WTC11 (cell line): ENCODE measurements at regions of chr19 and their contacts with region 1.

Region 1: GRCh38 chr19:10936661-10937084 is 8.1 kb downstream of the TIMM29 start:
- DNase-seq: peak; percentile 59
- ATAC-seq: peak; percentile 97
- H3K4me3 Mint-ChIP-seq: peak overlapping the region; percentile 11; the same call in 1 of the 2 replicates
- H3K27ac Mint-ChIP-seq: no peak overlapping the region
- H3K4me1 Mint-ChIP-seq: no peaks in the 10 kb centered on the region; the same call in 1 of the 2 replicates
- H3K27me3 Mint-ChIP-seq: no peaks in the 10 kb centered on the region
- CTCF ChIP-seq: peak; percentile 40

Region 2: DNA sequence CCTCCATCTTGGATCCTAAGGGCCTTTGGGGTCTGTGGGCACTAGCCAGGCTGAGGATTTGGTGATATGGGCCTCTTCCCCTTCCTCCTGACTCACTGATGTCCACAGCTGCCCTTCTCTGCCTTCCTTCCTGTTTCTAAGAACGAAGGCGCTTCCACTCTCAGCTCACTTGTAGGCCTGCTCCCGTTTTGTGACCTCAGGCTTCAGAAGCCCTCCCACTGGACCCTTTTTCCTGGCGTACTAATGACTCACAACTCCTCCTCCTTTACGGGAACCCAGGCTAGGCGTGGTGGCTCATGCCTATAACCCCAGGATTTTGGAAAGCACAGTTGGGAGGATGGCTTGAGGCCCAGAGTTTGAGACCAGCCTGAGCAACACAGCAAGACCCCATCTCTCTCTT is 156.3 kb before region 1 on chr19:
- CTCF ChIA-PET with region 1: no interaction called
- POLR2A ChIA-PET with region 1: no interaction called
- DNase-seq: no peak
- ATAC-seq: no peak
- H3K4me3 Mint-ChIP-seq: no peak overlapping the region
- H3K27ac Mint-ChIP-seq: peak overlapping the region; percentile 63
- H3K4me1 Mint-ChIP-seq: no peaks in the 10 kb centered on the region
- H3K27me3 Mint-ChIP-seq: no peaks in the 10 kb centered on the region
- CTCF ChIP-seq: no peak

Region 3: DNA sequence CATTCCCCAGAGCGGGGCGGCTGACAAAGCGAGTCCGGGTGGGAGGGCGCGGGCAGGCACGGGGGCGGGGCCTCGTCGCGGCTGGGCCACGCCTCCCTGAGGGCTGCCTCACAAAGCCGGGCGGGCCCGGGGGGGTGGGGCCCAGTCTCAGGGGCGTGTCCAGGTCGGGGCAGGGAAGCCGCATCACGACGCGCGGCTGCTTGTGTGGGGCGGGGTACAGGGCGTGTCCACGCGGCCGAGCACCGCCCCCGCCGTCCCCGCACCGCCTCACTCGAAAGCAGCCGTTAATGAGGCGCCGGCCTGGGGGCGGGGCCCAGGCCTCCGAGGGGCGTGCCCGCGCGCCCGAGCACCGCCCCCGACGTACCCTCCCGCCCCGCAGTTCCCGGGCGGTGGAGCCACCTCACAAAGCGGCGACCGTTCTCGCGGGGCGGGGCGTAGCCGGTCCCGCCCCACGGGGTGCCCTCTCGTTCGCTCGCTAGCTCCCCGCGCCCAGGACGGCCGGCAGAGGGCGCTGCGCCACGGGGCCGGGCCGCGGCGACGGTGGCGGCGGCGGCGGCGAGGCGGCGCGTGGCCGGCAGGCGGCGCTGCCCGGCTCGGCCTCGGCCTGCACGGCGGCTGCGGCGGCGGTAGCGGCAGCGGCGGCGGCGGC is 65.6 kb before region 1 on chr19 and contains the start of gene CARM1:
- CTCF ChIA-PET with region 1: interaction called, 10 read pairs
- POLR2A ChIA-PET with region 1: no interaction called
- DNase-seq: peak; percentile 99
- ATAC-seq: peak; percentile 90
- H3K4me3 Mint-ChIP-seq: peak within 1 kb of the TSS; percentile 90
- H3K27ac Mint-ChIP-seq: peak within 1 kb of the TSS; percentile 93
- H3K4me1 Mint-ChIP-seq: peaks cover 23% of the 10 kb centered on the region
- H3K27me3 Mint-ChIP-seq: no peaks in the 10 kb centered on the region; the same call in 1 of the 2 replicates
- CTCF ChIP-seq: peak; percentile 56
- total RNA-seq, gene CARM1: 125 to 126 TPM (median 126 TPM) in 3 replicates

Region 4: GRCh38 chr19:10911579-10912363 is 24.9 kb before region 1 on chr19:
- CTCF ChIA-PET with region 1: no interaction called
- POLR2A ChIA-PET with region 1: no interaction called
- DNase-seq: no peak
- ATAC-seq: no peak
- H3K4me3 Mint-ChIP-seq: no peak overlapping the region
- H3K27ac Mint-ChIP-seq: no peak overlapping the region
- H3K4me1 Mint-ChIP-seq: no peaks in the 10 kb centered on the region
- H3K27me3 Mint-ChIP-seq: no peaks in the 10 kb centered on the region
- CTCF ChIP-seq: no peak

Region 5: GRCh38 chr19:10960314-10961072 is 23.8 kb after region 1 on chr19 and contains the start of gene SMARCA4:
- CTCF ChIA-PET with region 1: interaction called, 77 read pairs
- POLR2A ChIA-PET with region 1: interaction called, 4 read pairs
- DNase-seq: peak; percentile 96
- ATAC-seq: peak; percentile 88
- H3K4me3 Mint-ChIP-seq: peak within 1 kb of the TSS; percentile 95
- H3K27ac Mint-ChIP-seq: peak within 1 kb of the TSS; percentile 86
- H3K4me1 Mint-ChIP-seq: peaks cover 19% of the 10 kb centered on the region
- H3K27me3 Mint-ChIP-seq: no peaks in the 10 kb centered on the region; the same call in 1 of the 2 replicates
- CTCF ChIP-seq: no peak
- total RNA-seq, gene SMARCA4: 268 to 295 TPM (median 284 TPM) in 3 replicates

Region 6: GRCh38 chr19:10979951-10980381 is 43.3 kb after region 1 on chr19:
- CTCF ChIA-PET with region 1: interaction called, 17 read pairs
- POLR2A ChIA-PET with region 1: no interaction called
- DNase-seq: no peak
- ATAC-seq: no peak
- H3K4me3 Mint-ChIP-seq: no peak overlapping the region
- H3K27ac Mint-ChIP-seq: peak overlapping the region; percentile 92
- H3K4me1 Mint-ChIP-seq: peaks cover 23% of the 10 kb centered on the region
- H3K27me3 Mint-ChIP-seq: no peaks in the 10 kb centered on the region
- CTCF ChIP-seq: no peak

Region 7: DNA sequence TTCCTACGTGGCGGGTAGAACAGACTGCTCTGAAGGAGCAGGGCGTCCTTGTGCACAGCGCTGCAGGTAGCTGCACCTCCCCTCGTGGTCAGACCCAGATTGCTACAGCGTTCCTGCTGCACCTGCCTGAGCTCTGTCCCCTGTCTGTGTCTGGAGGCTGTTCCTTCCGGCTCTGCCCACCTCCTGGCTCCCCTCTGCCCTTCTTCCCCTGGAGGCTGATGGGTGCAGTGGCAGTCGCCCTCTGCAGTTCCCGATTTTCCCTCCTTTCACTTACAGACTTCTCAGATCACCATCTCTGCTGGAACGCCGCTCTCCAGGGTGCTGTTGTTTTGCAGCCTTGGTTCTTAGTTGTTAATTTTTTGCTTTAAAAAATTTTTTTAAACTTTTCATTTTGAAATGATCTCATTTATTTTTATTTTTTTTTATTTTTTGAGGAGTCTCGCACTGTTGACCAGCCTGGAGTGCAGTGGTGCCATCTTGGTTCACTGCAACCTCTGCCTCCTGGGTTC is 77.8 kb after region 1 on chr19:
- CTCF ChIA-PET with region 1: interaction called, 16 read pairs
- POLR2A ChIA-PET with region 1: no interaction called
- DNase-seq: no peak
- ATAC-seq: peak; percentile 73
- H3K4me3 Mint-ChIP-seq: no peak overlapping the region
- H3K27ac Mint-ChIP-seq: peak overlapping the region; percentile 84; the same call in 1 of the 2 replicates
- H3K4me1 Mint-ChIP-seq: no peaks in the 10 kb centered on the region
- H3K27me3 Mint-ChIP-seq: no peaks in the 10 kb centered on the region
- CTCF ChIP-seq: no peak

Region 8: DNA sequence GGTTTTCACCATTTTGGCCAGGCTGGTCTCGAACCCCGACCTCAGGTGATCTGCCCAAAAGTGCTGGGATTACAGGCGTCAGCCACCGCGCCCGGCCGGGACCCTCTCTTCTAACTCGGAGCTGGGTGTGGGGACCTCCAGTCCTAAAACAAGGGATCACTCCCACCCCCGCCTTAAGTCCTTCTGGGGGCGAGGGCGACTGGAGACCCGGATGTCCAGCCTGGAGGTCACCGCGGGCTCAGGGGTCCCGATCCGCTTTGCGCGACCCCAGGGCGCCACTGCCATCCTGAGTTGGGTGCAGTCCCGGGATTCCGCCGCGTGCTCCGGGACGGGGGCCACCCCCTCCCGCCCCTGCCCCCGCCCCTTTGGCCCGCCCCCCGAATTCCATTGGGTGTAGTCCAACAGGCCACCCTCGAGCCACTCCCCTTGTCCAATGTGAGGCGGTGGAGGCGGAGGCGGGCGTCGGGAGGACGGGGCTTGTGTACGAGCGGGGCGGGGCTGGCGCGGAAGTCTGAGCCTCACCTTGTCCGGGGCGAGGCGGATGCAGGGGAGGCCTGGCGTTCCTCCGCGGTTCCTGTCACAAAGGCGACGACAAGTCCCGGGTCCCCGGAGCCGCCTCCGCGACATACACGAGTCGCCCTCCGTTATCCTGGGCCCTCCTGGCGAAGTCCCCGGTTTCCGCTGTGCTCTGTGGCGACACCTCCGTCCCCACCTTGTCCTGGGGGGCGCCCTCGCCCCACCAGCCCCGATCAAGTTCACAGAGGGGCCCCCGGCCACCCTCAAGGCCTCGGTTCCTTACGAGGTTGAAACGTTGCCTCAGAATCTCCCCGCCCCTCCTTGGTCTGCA is 153.6 kb after region 1 on chr19:
- CTCF ChIA-PET with region 1: interaction called, 12 read pairs
- POLR2A ChIA-PET with region 1: no interaction called
- DNase-seq: peak; percentile 98
- ATAC-seq: peak; percentile 93
- H3K4me3 Mint-ChIP-seq: peak overlapping the region; percentile 94
- H3K27ac Mint-ChIP-seq: peak overlapping the region; percentile 100
- H3K4me1 Mint-ChIP-seq: peaks cover 44% of the 10 kb centered on the region
- H3K27me3 Mint-ChIP-seq: no peaks in the 10 kb centered on the region
- CTCF ChIP-seq: no peak